ENCODE measurements at regions of chr11 and their contacts with region 1.

Region 1: DNA sequence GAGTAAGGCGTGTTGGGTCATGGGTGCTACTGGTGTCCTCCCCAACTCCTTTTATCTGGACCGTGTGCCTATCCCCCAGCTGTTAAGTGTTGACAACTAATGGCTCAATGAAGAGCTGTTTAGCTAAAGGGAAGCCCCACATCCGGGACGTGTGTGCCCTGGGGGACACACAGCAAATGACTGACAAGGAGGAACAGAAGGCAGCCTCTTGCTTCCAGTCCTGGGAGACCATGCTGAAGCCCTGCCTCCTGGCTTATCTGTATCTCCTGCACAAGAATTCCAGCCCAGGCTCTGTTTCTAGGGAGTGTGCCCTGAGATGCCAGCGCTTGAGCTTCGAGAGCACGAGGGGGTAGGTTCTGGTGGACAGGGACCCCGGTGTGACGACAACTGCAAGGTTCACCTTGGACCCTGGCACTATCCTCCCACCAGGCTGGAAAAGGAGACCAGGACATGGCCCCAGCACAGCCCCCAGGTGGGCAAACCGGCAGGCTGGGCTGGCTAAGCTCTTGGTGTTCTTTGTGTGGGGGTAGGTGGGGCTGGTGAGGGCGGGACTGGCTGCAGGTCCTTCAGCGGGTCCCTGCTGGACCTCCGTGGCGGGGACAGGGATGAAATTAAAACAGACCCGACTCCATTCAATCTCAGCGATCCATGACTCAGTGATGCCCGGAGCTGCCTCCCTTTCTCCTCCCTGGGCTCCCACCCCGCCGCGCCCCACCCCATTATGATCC is 21.0 kb downstream of the ASCL2 start:
- DNase-seq: no peak
- H3K4me3 ChIP-seq: no peak overlapping the region
- H3K27ac ChIP-seq: no peak overlapping the region
- H3K4me1 ChIP-seq: no peaks in the 10 kb centered on the region
- H3K27me3 ChIP-seq: no peaks in the 10 kb centered on the region
- CTCF ChIP-seq: no peak

Region 2: DNA sequence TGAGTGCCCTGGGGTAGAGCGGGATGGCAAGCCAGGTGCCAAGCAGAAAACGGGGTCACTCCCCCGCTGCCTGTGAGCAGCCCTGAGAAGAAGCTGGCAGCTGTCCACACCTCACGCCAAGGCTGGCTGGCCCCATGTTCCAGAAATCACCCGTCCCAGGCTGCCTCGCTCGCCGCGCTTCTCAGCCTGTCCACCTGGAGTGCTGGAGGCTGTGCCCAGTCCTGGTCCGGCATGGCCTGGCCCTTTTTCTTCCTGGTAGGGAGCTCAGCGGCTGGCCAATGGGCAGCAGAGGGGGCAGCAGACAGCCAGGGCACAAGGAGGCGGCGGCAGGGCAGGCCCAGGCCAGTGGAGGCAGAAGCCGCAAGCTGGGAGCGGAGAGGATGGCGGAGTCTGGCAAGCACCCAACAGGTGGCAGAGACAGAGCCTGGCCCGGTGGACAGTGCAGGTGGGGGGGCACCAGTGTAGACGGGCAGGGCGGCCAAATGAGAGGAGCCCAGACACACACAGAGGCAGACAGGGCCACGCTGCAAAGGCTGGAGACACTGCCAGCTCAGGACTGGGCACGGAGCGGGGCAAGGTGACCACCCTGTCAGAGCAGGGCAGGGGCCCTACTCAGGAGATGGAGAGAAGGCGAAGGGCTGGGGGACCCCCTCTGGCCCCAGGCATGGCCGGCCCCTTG is 40.5 kb before region 1 on chr11:
- CTCF ChIA-PET with region 1: no interaction called
- dilution Hi-C with region 1: loop called (anchors 5 kb)
- in situ Hi-C with region 1: no loop called
- intact Hi-C with region 1: no loop called
- DNase-seq: peak; percentile 48
- H3K4me3 ChIP-seq: no peak overlapping the region
- H3K27ac ChIP-seq: no peak overlapping the region
- H3K4me1 ChIP-seq: peaks cover 18% of the 10 kb centered on the region
- H3K27me3 ChIP-seq: peaks cover 2% of the 10 kb centered on the region
- CTCF ChIP-seq: peak in 1 of 2 donors; percentile 41

Region 3: DNA sequence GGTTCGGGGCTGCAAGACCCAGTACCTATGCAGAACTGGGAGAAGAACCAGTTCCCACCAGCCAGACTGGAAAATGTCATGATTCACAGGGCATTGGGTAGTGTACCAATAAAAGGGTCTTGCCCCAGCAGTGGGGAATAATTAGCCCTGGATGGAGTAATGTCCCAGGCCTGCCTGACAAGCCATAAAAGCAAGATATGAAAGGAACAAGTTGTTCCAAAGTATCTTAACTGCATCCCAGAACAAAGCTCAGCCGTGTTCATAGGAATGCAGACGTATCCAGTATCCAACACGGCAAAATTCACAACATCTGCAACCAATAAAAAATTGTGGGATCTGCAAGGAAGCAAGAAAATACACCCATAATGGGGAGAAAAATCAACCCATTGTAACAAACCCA is 26.9 kb before region 1 on chr11:
- CTCF ChIA-PET with region 1: no interaction called
- dilution Hi-C with region 1: no loop called
- in situ Hi-C with region 1: no loop called
- intact Hi-C with region 1: no loop called
- DNase-seq: no peak
- H3K4me3 ChIP-seq: no peak overlapping the region
- H3K27ac ChIP-seq: no peak overlapping the region
- H3K4me1 ChIP-seq: no peaks in the 10 kb centered on the region
- H3K27me3 ChIP-seq: peaks cover 11% of the 10 kb centered on the region
- CTCF ChIP-seq: no peak

Region 4: GRCh38 chr11:2342981-2343380 is 93.6 kb after region 1 on chr11:
- CTCF ChIA-PET with region 1: no interaction called
- dilution Hi-C with region 1: loop called (anchors 5 kb)
- in situ Hi-C with region 1: no loop called
- intact Hi-C with region 1: no loop called
- DNase-seq: peak; percentile 10
- H3K4me3 ChIP-seq: no peak overlapping the region
- H3K27ac ChIP-seq: no peak overlapping the region
- H3K4me1 ChIP-seq: no peaks in the 10 kb centered on the region
- H3K27me3 ChIP-seq: no peaks in the 10 kb centered on the region
- CTCF ChIP-seq: no peak

Region 5: GRCh38 chr11:2945031-2945756 is 695.8 kb after region 1 on chr11:
- CTCF ChIA-PET with region 1: no interaction called
- dilution Hi-C with region 1: no loop called
- in situ Hi-C with region 1: no loop called
- intact Hi-C with region 1: no loop called
- DNase-seq: peak; percentile 62
- H3K4me3 ChIP-seq: no peak overlapping the region
- H3K27ac ChIP-seq: no peak overlapping the region
- H3K4me1 ChIP-seq: peaks cover 35% of the 10 kb centered on the region
- H3K27me3 ChIP-seq: no peaks in the 10 kb centered on the region
- CTCF ChIP-seq: no peak